ENCODE measurements at regions of chr19 and their contacts with region 1.

Region 1: DNA sequence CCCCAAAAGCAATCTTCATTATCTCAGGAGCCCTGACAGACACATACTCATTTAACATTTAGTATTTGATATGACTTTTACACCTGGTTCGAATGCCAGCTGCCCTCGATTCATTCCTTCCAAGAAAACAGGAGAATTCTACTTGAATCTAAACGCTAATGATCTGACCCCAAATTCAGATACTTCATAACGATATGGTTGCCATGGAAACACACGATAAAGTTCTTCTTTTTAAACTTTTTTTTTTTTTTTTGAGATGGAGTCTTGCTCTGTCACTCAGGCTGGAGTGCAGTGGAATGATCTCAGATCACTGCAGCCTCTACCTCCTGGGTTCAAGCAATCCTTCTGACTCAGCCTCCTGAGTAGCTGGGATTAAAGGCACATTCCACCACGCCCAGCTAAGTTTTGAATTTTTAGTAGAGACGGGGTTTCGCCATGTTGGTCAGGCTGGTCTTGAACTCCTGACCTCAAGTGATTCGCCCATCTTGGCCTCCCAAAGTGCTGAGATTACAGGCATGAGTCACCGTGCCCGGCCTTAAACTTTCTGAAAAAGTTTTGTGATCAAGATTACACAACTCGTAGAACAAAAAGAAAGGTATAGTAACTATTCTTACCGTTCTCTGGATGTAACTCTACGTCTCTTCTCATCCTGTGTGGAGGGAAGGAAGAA is 21.4 kb downstream of the DNMT1 start:
- DNase-seq: no peak
- H3K4me3 ChIP-seq: no peak overlapping the region
- H3K4me1 ChIP-seq: no peaks in the 10 kb centered on the region
- H3K27me3 ChIP-seq: no peaks in the 10 kb centered on the region

Region 2: DNA sequence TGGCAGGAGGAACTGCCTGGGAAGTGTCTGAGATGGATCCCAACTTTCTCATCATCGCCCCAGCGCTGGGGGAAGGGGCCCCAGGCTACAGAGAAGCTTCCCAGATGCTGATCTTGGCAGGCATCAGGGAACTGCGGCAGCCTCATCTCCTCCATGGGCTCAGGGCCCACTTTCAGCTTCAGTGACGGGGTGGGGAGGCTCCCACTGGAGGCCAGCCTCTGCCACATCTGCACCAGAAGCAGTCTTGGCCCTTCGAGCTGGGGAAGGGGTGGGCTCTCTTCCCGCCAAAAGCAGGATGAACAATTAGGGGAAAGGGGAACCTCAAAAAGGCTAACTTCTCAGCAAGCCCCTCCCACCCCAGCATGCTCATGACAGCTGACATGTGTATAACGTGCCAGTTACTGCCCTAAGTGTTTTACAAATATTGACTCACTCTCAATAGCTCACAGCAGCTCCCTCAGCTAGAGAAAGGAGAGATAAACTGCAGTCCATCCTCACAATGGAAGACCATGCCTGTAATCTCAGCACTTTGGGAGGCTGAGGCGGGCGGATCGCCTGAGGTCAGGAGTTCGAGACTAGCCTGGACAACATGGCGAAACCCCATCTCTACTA is 64.9 kb after region 1 on chr19:
- in situ Hi-C with region 1: no loop called
- DNase-seq: no peak
- H3K4me3 ChIP-seq: no peak overlapping the region
- H3K4me1 ChIP-seq: no peaks in the 10 kb centered on the region
- H3K27me3 ChIP-seq: no peaks in the 10 kb centered on the region

Region 3: GRCh38 chr19:10346509-10346908 is 173.1 kb after region 1 on chr19:
- in situ Hi-C with region 1: no loop called
- DNase-seq: no peak
- H3K4me3 ChIP-seq: no peak overlapping the region
- H3K4me1 ChIP-seq: no peaks in the 10 kb centered on the region
- H3K27me3 ChIP-seq: no peaks in the 10 kb centered on the region

Region 4: GRCh38 chr19:11018179-11018578 is 844.8 kb after region 1 on chr19:
- in situ Hi-C with region 1: loop called (anchors 25 kb)
- DNase-seq: no peak
- H3K4me3 ChIP-seq: no peak overlapping the region
- H3K4me1 ChIP-seq: no peaks in the 10 kb centered on the region
- H3K27me3 ChIP-seq: no peaks in the 10 kb centered on the region

Region 5: GRCh38 chr19:11106477-11106876 is 933.1 kb after region 1 on chr19:
- in situ Hi-C with region 1: loop called (anchors 25 kb)
- DNase-seq: no peak
- H3K4me3 ChIP-seq: no peak overlapping the region
- H3K4me1 ChIP-seq: no peaks in the 10 kb centered on the region
- H3K27me3 ChIP-seq: no peaks in the 10 kb centered on the region